HEK293T (cell line): ENCODE measurements at regions of chr17 and their contacts with region 1.

Region 1: GRCh38 chr17:57121338-57122042 is 36.4 kb downstream of the AKAP1 start:
- DNase-seq: peak; percentile 71

Region 2: GRCh38 chr17:57106107-57106835 is 15.2 kb before region 1 on chr17:
- CTCF ChIA-PET with region 1: interaction called, 17 read pairs
- POLR2A ChIA-PET with region 1: interaction called, 3 read pairs
- DNase-seq: peak; percentile 74

Region 3: GRCh38 chr17:57174591-57174990 is 53.1 kb after region 1 on chr17:
- CTCF ChIA-PET with region 1: no interaction called
- POLR2A ChIA-PET with region 1: no interaction called
- DNase-seq: no peak